ENCODE measurements at regions of chr14 and their contacts with region 1.

Region 1: GRCh38 chr14:30977752-30978151 is 47.7 kb upstream of the AP4S1 start:
- DNase-seq: no peak
- ATAC-seq: no peak
- H3K4me3 ChIP-seq: no peak overlapping the region
- H3K4me3 Mint-ChIP-seq: no peak overlapping the region
- H3K27ac ChIP-seq: no peak overlapping the region
- H3K27ac Mint-ChIP-seq: no peak overlapping the region
- H3K4me1 ChIP-seq: peaks cover 0 to 9% of the 10 kb centered on the region in 2 experiments
- H3K4me1 Mint-ChIP-seq: peaks cover 51 to 60% (median 56%) of the 10 kb centered on the region in 3 donors
- H3K27me3 ChIP-seq: no peaks in the 10 kb centered on the region
- H3K27me3 Mint-ChIP-seq: no peaks in the 10 kb centered on the region

Region 2: DNA sequence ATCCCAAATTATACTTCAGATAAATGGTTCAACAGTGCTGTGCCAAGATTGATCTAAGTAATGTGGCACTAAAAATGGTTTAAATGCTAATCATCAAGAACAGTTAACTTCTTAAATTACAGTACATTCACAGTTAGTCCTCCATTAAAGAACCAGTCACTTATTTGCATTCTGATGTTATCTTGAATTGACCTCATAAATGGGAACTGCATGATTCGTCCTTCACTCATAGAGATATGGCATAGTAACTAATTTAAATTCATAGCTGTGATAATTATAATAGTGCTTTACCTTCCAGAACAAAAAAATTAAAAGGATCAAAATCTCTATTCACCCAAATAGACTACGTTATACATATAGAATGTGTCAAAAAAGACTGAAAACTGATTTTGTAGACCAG is 42.3 kb before region 1 on chr14:
- CTCF ChIA-PET with region 1: interaction called in 1 of 2 experiments, 12 read pairs
- POLR2A ChIA-PET with region 1: no interaction called
- DNase-seq: no peak
- ATAC-seq: no peak
- H3K4me3 ChIP-seq: no peak overlapping the region
- H3K4me3 Mint-ChIP-seq: no peak overlapping the region
- H3K27ac ChIP-seq: no peak overlapping the region
- H3K27ac Mint-ChIP-seq: no peak overlapping the region
- H3K4me1 ChIP-seq: no peaks in the 10 kb centered on the region
- H3K4me1 Mint-ChIP-seq: no peaks in the 10 kb centered on the region
- H3K27me3 ChIP-seq: no peaks in the 10 kb centered on the region
- H3K27me3 Mint-ChIP-seq: no peaks in the 10 kb centered on the region

Measured in T-cell (primary cell).